ENCODE measurements at regions of chr3 and their contacts with region 1.

Region 1: GRCh38 chr3:3015185-3016089 is 94.7 kb downstream of the IL5RA start:
- DNase-seq: peak; percentile 46
- H3K4me3 Mint-ChIP-seq: no peak overlapping the region
- H3K27ac Mint-ChIP-seq: no peak overlapping the region
- H3K4me1 Mint-ChIP-seq: peaks cover 9% of the 10 kb centered on the region
- H3K27me3 Mint-ChIP-seq: peaks cover 7% of the 10 kb centered on the region
- CTCF ChIP-seq: no peak

Region 2: DNA sequence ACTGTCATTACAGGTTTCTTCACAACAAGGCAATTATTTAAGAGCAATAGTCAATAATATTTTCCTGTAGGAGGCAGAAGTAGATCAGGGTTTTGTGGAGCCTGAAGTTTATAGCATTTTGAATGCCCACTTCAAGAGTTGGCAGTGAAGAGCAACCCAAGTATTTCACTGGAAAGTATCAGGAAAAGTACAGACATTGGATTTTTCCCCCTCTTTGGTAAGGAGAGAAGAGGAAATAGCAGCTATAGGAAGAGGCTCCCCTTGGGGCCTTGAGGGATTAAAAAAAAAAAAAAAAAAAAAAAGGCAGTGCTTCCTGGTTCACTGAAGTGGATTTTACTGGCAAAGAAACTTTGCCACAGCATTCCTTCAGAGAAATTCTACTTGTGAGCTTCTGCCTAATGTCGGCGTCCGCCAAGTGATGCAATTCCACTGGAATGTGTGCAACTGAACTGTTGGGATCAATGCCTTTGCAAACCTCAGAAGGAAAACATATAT is 1928.3 kb before region 1 on chr3:
- CTCF ChIA-PET with region 1: no interaction called
- intact Hi-C with region 1: loop called (anchors 1 kb)
- DNase-seq: peak; percentile 61
- H3K4me3 Mint-ChIP-seq: no peak overlapping the region
- H3K27ac Mint-ChIP-seq: peak overlapping the region; percentile 100
- H3K4me1 Mint-ChIP-seq: peaks cover 14% of the 10 kb centered on the region
- H3K27me3 Mint-ChIP-seq: no peaks in the 10 kb centered on the region
- CTCF ChIP-seq: no peak

Region 3: DNA sequence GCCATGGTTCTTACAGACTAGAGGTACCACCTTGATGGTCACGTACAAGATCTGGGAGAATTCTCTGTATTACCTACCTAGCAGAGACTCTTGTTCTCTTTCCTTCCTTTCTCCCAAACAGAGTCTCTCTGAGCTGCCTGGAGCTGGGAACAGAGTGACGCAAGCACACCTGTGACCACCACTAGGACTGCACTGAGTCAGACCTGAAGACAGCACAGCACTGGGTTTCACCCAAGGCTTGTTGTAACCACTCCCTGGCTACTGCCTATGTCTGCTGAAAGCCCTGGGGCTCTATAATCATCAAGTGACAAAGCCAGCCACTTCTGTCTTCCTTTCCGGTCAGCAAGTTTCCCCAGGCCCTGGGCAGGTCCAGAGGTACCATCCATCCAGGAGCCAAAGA is 1210.1 kb before region 1 on chr3:
- CTCF ChIA-PET with region 1: no interaction called
- intact Hi-C with region 1: loop called (anchors 10 kb)
- DNase-seq: no peak
- H3K4me3 Mint-ChIP-seq: no peak overlapping the region
- H3K27ac Mint-ChIP-seq: no peak overlapping the region
- H3K4me1 Mint-ChIP-seq: no peaks in the 10 kb centered on the region
- H3K27me3 Mint-ChIP-seq: no peaks in the 10 kb centered on the region
- CTCF ChIP-seq: no peak

Region 4: DNA sequence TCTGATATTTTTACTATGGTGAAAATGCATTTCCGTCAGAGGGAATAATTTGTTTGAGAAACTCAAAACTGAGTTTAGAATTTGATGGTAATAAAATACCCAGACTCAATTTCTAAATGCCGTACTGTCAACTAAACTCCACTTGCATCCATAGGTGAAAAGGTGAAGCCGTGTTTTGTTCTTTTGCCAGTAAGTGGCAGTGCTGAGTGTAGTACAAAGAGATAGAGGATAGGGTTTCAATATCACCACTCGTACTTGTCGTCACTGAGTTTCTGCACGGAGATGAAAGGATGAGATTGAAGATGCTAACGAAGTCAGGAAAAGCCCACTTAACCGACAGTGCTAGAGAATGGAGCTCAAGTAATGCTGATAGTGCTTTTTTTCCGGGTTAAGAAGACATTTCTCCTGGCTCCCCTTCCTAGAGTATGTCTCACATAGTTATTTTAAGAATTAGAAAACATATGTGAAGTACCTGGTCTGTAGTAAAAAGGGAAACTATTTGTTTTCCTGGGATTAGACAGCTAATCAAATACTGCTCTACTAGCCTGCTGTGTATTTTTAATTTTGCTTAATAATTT is 250.3 kb before region 1 on chr3:
- CTCF ChIA-PET with region 1: no interaction called
- intact Hi-C with region 1: loop called (anchors 2 kb)
- DNase-seq: peak; percentile 16
- H3K4me3 Mint-ChIP-seq: no peak overlapping the region
- H3K27ac Mint-ChIP-seq: no peak overlapping the region
- H3K4me1 Mint-ChIP-seq: no peaks in the 10 kb centered on the region
- H3K27me3 Mint-ChIP-seq: no peaks in the 10 kb centered on the region
- CTCF ChIP-seq: no peak

Region 5: DNA sequence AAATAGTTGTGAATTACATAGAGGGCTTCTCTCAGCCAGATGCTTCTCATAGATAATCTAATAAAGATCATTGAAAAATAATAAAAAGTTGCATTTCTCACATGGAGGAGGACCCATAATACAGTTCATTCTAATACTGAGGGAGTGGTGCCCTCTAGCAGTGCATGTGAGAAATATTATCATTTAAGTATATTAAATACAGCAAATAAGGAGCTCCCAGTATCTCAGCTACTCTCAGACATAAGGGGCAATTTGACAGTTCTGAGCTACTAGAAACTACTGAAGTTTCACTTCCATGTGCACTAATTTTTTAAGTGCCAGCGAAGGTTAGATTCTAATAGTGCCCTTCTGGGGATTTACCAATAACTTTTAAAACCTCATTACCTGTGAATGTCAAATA is 93.5 kb before region 1 on chr3:
- CTCF ChIA-PET with region 1: interaction called, 6 read pairs
- intact Hi-C with region 1: loop called (anchors 2 kb)
- DNase-seq: peak; percentile 12
- H3K4me3 Mint-ChIP-seq: no peak overlapping the region
- H3K27ac Mint-ChIP-seq: no peak overlapping the region
- H3K4me1 Mint-ChIP-seq: no peaks in the 10 kb centered on the region
- H3K27me3 Mint-ChIP-seq: no peaks in the 10 kb centered on the region
- CTCF ChIP-seq: no peak

Measured in Calu3 (cell line).